ENCODE measurements at regions of chr2 and their contacts with region 1.

Region 1: GRCh38 chr2:190511104-190511503 is 23.4 kb downstream of the NEMP2 start:
- DNase-seq: peak; percentile 61
- H3K4me3 ChIP-seq: no peak overlapping the region
- H3K27ac ChIP-seq: no peak overlapping the region
- H3K4me1 ChIP-seq: peaks cover 0 to 2% of the 10 kb centered on the region in 2 experiments; a peak in 1 of 4 replicates
- H3K27me3 ChIP-seq: no peaks in the 10 kb centered on the region
- CTCF ChIP-seq: peak; percentile 76
- EP300 ChIP-seq: no peak
- RAD21 ChIP-seq: peak; percentile 94

Region 2: GRCh38 chr2:190343500-190344275 is 167.4 kb before region 1 on chr2 and contains the start of gene INPP1:
- CTCF ChIA-PET with region 1: interaction called, 19 read pairs
- POLR2A ChIA-PET with region 1: no interaction called
- DNase-seq: peak; percentile 87
- H3K4me3 ChIP-seq: peak within 1 kb of the TSS; percentile 74 to 82
- H3K27ac ChIP-seq: peak within 1 kb of the TSS; percentile 29 to 54; a peak in 3 of 4 replicates
- H3K4me1 ChIP-seq: peaks cover 4 to 9% of the 10 kb centered on the region in 2 experiments; a peak in 2 of 4 replicates
- H3K27me3 ChIP-seq: no peaks in the 10 kb centered on the region
- CTCF ChIP-seq: no peak
- EP300 ChIP-seq: no peak
- RAD21 ChIP-seq: no peak
- polyA plus RNA-seq, gene INPP1: 5.7 and 6.4 TPM in 2 replicates

Region 3: GRCh38 chr2:190382851-190383250 is 128.3 kb before region 1 on chr2:
- CTCF ChIA-PET with region 1: interaction called, 28 read pairs
- POLR2A ChIA-PET with region 1: no interaction called
- DNase-seq: peak; percentile 30
- H3K4me3 ChIP-seq: no peak overlapping the region
- H3K27ac ChIP-seq: no peak overlapping the region
- H3K4me1 ChIP-seq: no peaks in the 10 kb centered on the region; a peak in 1 of 4 replicates
- H3K27me3 ChIP-seq: no peaks in the 10 kb centered on the region
- CTCF ChIP-seq: peak; percentile 43
- EP300 ChIP-seq: no peak
- RAD21 ChIP-seq: peak; percentile 78

Region 4: GRCh38 chr2:190578158-190579057 is 67.3 kb after region 1 on chr2:
- CTCF ChIA-PET with region 1: no interaction called
- POLR2A ChIA-PET with region 1: no interaction called
- DNase-seq: no peak
- H3K4me3 ChIP-seq: no peak overlapping the region
- H3K27ac ChIP-seq: no peak overlapping the region
- H3K4me1 ChIP-seq: peaks cover 0 to under 1% of the 10 kb centered on the region in 2 experiments; a peak in 1 of 4 replicates
- H3K27me3 ChIP-seq: no peaks in the 10 kb centered on the region
- CTCF ChIP-seq: no peak
- EP300 ChIP-seq: no peak
- RAD21 ChIP-seq: no peak

Region 5: DNA sequence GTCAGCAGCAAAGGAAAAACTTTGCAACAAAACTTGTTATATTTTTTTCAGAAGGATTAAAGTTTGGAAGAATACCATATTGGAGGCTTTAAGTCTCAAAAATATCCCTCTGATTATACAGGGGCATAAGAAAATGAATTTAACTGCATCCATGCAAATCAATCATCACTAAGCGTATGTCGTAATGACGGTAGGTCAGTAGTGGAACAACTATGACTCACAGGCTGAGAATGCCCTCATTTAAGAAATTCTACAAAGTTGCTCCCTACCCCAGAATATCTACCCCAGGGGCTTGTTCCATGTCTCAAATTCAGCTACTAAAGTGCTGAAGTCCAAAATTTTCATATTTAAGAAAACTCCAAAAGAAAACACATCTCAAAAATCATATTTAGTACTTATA is 125.3 kb after region 1 on chr2:
- CTCF ChIA-PET with region 1: no interaction called
- POLR2A ChIA-PET with region 1: no interaction called
- DNase-seq: no peak
- H3K4me3 ChIP-seq: no peak overlapping the region
- H3K27ac ChIP-seq: peak overlapping the region; percentile 16 to 75; a peak in 1 of 4 replicates
- H3K4me1 ChIP-seq: peaks cover 12 to 15% of the 10 kb centered on the region in 2 experiments
- H3K27me3 ChIP-seq: no peaks in the 10 kb centered on the region
- CTCF ChIP-seq: no peak
- EP300 ChIP-seq: no peak
- RAD21 ChIP-seq: no peak

Measured in SK-N-SH (cell line).